Heart left ventricle (tissue), 16 donors: ENCODE measurements at regions of chr7 and their contacts with region 1.

Region 1: DNA sequence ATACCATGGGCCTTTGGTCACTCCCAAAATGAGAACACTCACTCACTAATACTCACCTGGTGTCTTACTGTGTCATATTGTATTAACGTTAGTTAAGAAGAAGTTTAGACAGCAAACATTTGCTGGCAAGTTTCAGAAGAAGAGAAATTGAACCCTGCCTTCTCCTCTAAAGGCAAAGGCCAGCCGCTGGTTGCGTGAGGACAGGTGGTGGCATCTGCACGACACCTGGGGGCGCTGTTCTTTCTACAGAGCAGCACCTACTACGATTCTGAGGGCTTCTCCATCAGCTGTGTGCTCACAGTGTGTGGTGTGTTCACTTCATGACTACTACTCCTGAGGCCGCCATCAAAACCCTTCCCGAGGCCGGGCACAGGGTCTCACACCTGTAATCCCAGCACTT is 17.9 kb upstream of the CLEC2L start:
- DNase-seq: no peak
- ATAC-seq: no peak
- H3K4me3 ChIP-seq: no peak overlapping the region
- H3K27ac ChIP-seq: no peak overlapping the region
- H3K4me1 ChIP-seq: no peaks in the 10 kb centered on the region
- H3K27me3 ChIP-seq: peaks cover 0 to 4% (median 0%) of the 10 kb centered on the region in 9 donors
- CTCF ChIP-seq: peak in 3 of 12 donors; percentile 8 to 19 (median 12)
- POLR2A ChIP-seq: no peak

Region 2: DNA sequence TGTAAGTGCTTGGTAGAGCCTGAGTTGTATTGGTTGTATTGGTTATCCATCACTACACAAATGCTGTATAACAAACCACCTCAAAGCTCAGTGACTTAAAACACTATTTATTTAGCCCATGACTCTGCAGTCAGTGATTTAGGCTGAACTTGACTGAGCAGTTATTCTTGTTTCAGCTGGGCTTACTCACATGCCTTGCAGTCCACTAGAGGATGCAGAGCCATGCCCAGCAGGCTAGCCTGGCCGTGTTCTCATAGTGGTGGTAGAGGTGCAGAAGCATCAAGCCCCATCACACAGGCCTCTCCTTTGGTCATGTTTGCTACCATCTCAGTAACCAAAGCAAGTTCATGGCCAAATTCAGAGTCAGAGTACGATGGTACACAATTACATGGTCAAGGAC is 102.0 kb before region 1 on chr7:
- intact Hi-C with region 1: no loop called
- DNase-seq: no peak
- ATAC-seq: no peak
- H3K4me3 ChIP-seq: no peak overlapping the region
- H3K27ac ChIP-seq: no peak overlapping the region
- H3K4me1 ChIP-seq: no peaks in the 10 kb centered on the region
- H3K27me3 ChIP-seq: no peaks in the 10 kb centered on the region
- CTCF ChIP-seq: no peak
- POLR2A ChIP-seq: no peak

Region 3: DNA sequence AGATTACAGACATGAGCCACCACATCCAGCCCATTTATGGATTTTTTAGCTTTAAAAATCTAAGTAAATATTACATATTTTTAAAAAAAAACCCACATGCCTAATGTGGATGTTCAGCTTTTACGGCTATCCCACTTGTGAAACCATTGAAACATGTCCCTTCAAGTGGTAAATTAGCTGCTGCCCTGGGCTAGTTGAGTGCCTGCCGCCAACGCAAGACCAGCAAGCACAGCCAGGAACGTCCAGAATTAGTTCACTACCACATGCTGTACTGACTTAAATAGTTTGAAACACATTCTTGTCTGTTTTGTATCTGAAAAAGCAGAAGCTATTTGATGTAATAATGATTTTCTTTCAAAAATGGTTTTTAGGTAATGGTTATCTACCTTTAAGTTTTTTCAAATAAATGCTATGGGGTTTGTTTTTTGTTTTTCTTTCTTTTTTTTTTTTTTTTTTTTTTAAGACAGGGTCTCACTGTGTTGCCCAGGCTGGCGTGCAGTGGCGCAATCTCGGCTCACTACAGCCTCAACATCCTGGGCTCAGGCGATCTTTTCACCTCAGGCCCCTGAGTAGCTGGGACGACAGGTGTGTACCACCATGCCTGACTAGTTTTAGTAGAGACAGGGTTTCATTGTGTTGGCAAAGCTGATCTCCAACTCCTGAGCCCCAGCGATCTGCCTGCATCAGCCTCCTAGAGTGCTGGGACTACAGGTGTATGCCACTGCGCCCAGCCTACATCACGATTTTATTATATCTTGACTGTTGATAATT is 79.1 kb before region 1 on chr7:
- intact Hi-C with region 1: no loop called
- DNase-seq: peak in 1 of 5 donors; percentile 47
- ATAC-seq: peak; percentile 71 to 86 (median 76)
- H3K4me3 ChIP-seq: no peak overlapping the region
- H3K27ac ChIP-seq: peak overlapping the region in 8 of 12 donors; percentile 12 to 42 (median 26)
- H3K4me1 ChIP-seq: peaks cover 0 to 33% (median 6%) of the 10 kb centered on the region in 12 donors
- H3K27me3 ChIP-seq: no peaks in the 10 kb centered on the region
- CTCF ChIP-seq: no peak
- POLR2A ChIP-seq: no peak

Region 4: DNA sequence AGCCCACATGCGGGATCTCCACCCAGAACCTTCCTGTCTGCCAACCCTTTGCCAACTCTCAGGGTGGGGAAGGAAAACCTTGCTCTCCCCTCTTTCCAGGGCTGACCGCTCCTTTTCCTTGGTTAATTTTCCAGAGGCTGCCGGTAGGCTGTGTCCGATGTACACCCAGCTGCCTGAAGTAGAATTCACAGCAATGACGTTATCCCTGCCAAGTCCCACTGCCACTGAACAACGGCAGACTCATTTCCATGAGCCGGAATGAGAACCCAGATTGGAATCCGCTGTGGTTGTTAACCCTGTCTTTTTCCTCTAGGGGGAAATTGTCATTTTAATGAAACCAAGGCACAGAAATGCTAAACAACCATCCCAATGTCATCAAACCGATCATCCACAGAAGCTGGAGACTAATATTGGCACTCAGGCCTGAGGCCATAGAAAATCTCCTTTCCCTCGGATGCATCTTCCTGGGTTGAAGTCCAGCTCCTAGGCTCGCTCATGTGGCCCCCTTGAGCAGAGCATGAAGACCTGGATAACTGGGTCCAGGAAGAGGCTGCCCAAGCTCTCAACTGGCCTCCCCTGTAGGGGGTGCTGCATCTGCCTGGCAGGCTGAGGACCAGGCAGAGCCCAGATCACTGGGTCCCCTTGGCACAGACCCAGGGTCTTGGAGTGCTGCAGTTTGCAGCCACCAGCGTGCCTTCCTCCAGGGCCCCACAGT is 52.4 kb before region 1 on chr7:
- intact Hi-C with region 1: no loop called
- DNase-seq: no peak
- ATAC-seq: no peak
- H3K4me3 ChIP-seq: no peak overlapping the region
- H3K27ac ChIP-seq: no peak overlapping the region
- H3K4me1 ChIP-seq: peaks cover 0 to 4% (median 0%) of the 10 kb centered on the region in 12 donors
- H3K27me3 ChIP-seq: no peaks in the 10 kb centered on the region
- CTCF ChIP-seq: no peak
- POLR2A ChIP-seq: no peak

Region 5: GRCh38 chr7:139560678-139561077 is 55.1 kb after region 1 on chr7:
- intact Hi-C with region 1: loop called in 1 of 10 experiments (anchors 5 kb)
- DNase-seq: peak in 2 of 5 donors; percentile 8 to 53
- ATAC-seq: peak in 3 of 4 donors; percentile 30 to 64 (median 54)
- H3K4me3 ChIP-seq: no peak overlapping the region
- H3K27ac ChIP-seq: no peak overlapping the region
- H3K4me1 ChIP-seq: peaks cover 0 to 4% (median 0%) of the 10 kb centered on the region in 12 donors
- H3K27me3 ChIP-seq: peaks cover 0 to 6% (median 0%) of the 10 kb centered on the region in 9 donors
- CTCF ChIP-seq: no peak
- POLR2A ChIP-seq: no peak

Region 6: GRCh38 chr7:139602143-139602722 is 96.7 kb after region 1 on chr7:
- intact Hi-C with region 1: loop called in 1 of 10 experiments (anchors 10 kb)
- DNase-seq: no peak
- ATAC-seq: peak in 3 of 4 donors; percentile 65 to 71 (median 68)
- H3K4me3 ChIP-seq: no peak overlapping the region
- H3K27ac ChIP-seq: no peak overlapping the region
- H3K4me1 ChIP-seq: peaks cover 0 to 32% (median 0%) of the 10 kb centered on the region in 12 donors
- H3K27me3 ChIP-seq: no peaks in the 10 kb centered on the region
- CTCF ChIP-seq: peak; percentile 30 to 64 (median 50)
- POLR2A ChIP-seq: no peak

Region 7: GRCh38 chr7:139620676-139621344 is 115.2 kb after region 1 on chr7:
- intact Hi-C with region 1: loop called in 5 of 10 experiments (anchors 10 kb)
- DNase-seq: peak in 1 of 5 donors; percentile 40
- ATAC-seq: peak in 1 of 4 donors; percentile 44
- H3K4me3 ChIP-seq: no peak overlapping the region
- H3K27ac ChIP-seq: no peak overlapping the region
- H3K4me1 ChIP-seq: peaks cover 0 to 9% (median 0%) of the 10 kb centered on the region in 12 donors
- H3K27me3 ChIP-seq: no peaks in the 10 kb centered on the region
- CTCF ChIP-seq: peak; percentile 38 to 63 (median 52)
- POLR2A ChIP-seq: no peak

Region 8: DNA sequence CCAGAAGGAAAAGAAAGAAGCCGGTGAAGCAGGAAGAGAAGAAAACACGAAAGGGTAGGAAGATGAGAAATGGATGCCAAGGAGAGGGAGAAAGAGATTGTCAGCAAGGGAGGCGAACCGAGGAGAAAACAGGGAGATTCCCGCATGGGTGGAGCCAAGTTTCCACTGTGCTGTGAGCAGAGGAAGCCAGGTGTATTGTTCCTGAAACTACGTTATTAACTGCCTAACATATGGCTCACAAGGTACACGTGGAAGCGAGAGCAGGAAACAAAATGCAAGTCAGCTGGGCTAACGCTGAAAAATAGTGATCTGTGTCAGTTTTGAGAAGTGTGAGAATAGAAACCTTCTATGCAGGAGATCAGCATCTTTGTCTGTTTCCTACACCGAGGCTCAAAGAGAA is 292.7 kb after region 1 on chr7:
- intact Hi-C with region 1: loop called in 1 of 10 experiments (anchors 2 kb)
- DNase-seq: no peak
- ATAC-seq: no peak
- H3K4me3 ChIP-seq: no peak overlapping the region
- H3K27ac ChIP-seq: no peak overlapping the region
- H3K4me1 ChIP-seq: peaks cover 0 to 17% (median 0%) of the 10 kb centered on the region in 12 donors
- H3K27me3 ChIP-seq: no peaks in the 10 kb centered on the region
- CTCF ChIP-seq: no peak
- POLR2A ChIP-seq: no peak